Right cardiac atrium (tissue), 5 donors: ENCODE measurements at regions of chr17 and their contacts with region 1.

Region 1: GRCh38 chr17:13594762-13595598 is 6.7 kb downstream of the HS3ST3A1 start:
- DNase-seq: peak; percentile 53 to 74 (median 64)
- ATAC-seq: peak; percentile 59 to 65
- H3K4me3 ChIP-seq: no peak overlapping the region
- H3K27ac ChIP-seq: no peak overlapping the region
- H3K4me1 ChIP-seq: peaks cover 6% of the 10 kb centered on the region
- H3K27me3 ChIP-seq: no peaks in the 10 kb centered on the region

Region 2: DNA sequence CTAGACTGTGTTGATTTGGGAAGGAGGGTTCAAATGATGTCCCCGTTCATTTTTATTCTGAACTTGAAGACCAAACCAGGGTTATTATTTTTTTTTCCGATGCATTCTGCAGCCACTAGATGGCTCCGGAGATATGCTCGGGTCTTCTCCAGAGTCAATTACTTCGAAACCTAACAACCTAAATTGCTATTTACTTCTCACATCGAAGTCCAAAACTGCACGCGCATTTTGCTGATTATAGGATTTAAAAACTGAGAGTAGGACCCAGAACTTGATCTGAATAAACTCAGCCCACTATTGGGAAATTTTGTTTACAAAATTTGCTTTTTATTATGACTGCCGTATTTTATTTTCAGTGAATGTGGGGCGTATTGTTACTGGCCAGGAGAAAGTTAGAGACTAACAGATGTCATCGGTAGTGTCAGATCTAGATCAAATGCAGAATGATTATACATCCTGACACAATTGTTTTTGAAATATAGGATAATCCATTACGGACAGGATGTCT is 257.1 kb before region 1 on chr17:
- intact Hi-C with region 1: loop called in 2 of 4 experiments (anchors 5 to 10 kb)
- DNase-seq: no peak
- ATAC-seq: no peak
- H3K4me3 ChIP-seq: peak overlapping the region; percentile 59
- H3K27ac ChIP-seq: no peak overlapping the region
- H3K4me1 ChIP-seq: no peaks in the 10 kb centered on the region
- H3K27me3 ChIP-seq: no peaks in the 10 kb centered on the region

Region 3: GRCh38 chr17:13346996-13347765 is 247.8 kb before region 1 on chr17:
- intact Hi-C with region 1: loop called in 1 of 4 experiments (anchors 10 kb)
- DNase-seq: no peak
- ATAC-seq: no peak
- H3K4me3 ChIP-seq: no peak overlapping the region
- H3K27ac ChIP-seq: no peak overlapping the region
- H3K4me1 ChIP-seq: no peaks in the 10 kb centered on the region
- H3K27me3 ChIP-seq: no peaks in the 10 kb centered on the region

Region 4: GRCh38 chr17:14300575-14301278 is 705.7 kb after region 1 on chr17 and contains the start of gene HS3ST3B1:
- intact Hi-C with region 1: loop called (anchors 2 to 5 kb)
- DNase-seq: peak; percentile 98 to 99 (median 98)
- ATAC-seq: peak; percentile 94 to 96
- H3K4me3 ChIP-seq: peak within 1 kb of the TSS; percentile 41
- H3K27ac ChIP-seq: peak within 1 kb of the TSS; percentile 20
- H3K4me1 ChIP-seq: no peaks in the 10 kb centered on the region
- H3K27me3 ChIP-seq: no peaks in the 10 kb centered on the region
- total RNA-seq, gene HS3ST3B1: 1.1 to 2.6 (median 2.1) TPM

Region 5: DNA sequence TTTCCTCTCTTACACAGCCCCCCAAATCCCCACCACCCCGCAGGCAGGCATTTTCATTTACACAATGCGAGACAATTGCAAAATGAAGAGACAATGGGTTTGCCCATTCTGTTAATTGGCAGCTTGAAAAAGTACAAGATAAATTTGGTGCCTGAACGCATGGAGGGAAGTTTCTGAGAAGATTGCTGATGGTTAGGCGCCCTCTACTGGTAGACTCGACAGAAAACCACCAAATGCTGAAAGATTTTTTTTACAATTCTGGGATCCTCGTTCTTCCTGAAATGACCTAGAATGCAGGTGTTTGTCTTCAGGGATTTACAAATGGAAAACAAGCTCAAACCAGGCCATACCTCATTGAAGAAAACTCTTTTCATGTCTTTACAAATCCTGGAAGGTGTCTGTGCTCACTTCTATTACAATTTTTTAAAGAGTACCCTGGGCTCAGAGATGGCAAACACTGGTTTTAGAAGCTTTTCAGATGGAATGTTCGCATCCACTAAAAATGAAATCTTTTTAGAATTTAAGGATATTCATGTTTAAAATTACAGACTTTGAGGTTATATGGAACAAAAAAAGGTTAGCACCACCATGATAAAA is 1331.6 kb after region 1 on chr17:
- intact Hi-C with region 1: loop called in 3 of 4 experiments (anchors 5 to 10 kb)
- DNase-seq: peak in 1 of 3 donors; percentile 13
- ATAC-seq: no peak
- H3K4me3 ChIP-seq: no peak overlapping the region
- H3K27ac ChIP-seq: no peak overlapping the region
- H3K4me1 ChIP-seq: no peaks in the 10 kb centered on the region
- H3K27me3 ChIP-seq: no peaks in the 10 kb centered on the region